Activated T-helper 1 cell treated with anti-CD3 and anti-CD28 coated beads, Interleukin-12 subunit alpha, Interleukin-12 subunit beta, Interleukin-2, Interleukin-4 antibody, amounts not matched to agents 30 ng/mL and 10 ng/mL and 1 ng/mL, durations not matched to agents 14 hours and 24 hours and 36 hours (primary cell): ENCODE measurements at regions of chr5 and their contacts with region 1.

Region 1: DNA sequence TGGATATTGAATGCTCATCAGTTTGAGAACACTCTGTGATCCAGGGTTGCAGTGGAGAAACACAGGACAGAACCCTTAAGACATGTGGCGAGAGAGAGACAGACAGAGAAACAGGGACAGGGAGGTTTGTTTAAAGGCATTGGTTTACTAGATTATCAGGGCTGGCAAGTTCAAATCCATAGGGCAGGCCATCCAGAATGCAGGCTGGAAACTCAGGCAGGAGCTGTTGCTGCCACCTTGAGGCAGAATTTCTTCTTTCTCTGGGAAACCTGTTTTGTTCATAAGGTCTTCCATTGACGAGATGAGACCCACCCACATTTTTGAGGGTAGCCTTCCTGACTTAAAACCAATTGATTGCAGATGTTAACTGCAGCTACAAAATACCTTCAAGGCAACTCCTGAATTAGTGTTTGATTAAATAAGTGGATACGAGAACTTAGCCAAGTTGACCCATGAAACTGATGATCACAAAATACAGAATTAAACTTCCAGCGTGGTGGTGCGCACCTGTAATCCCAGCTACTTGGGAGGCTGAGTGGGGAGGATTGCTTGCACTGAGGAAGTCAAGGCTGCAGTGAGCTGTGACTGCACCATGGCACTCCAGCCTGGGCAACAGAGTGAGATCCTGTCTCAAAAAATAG is 55.9 kb downstream of the NSUN2 start:
- DNase-seq: no peak
- H3K4me3 Mint-ChIP-seq: no peak overlapping the region
- H3K27ac Mint-ChIP-seq: no peak overlapping the region
- H3K4me1 Mint-ChIP-seq: peaks cover 6% of the 10 kb centered on the region
- H3K27me3 Mint-ChIP-seq: peaks cover 25% of the 10 kb centered on the region

Region 2: GRCh38 chr5:5886812-5887486 is 690.0 kb before region 1 on chr5:
- intact Hi-C with region 1: loop called (anchors 1 kb)
- DNase-seq: peak; percentile 41
- H3K4me3 Mint-ChIP-seq: no peak overlapping the region
- H3K27ac Mint-ChIP-seq: no peak overlapping the region
- H3K4me1 Mint-ChIP-seq: no peaks in the 10 kb centered on the region
- H3K27me3 Mint-ChIP-seq: no peaks in the 10 kb centered on the region

Region 3: GRCh38 chr5:6291961-6292360 is 285.0 kb before region 1 on chr5:
- intact Hi-C with region 1: loop called (anchors 2 kb)
- DNase-seq: no peak
- H3K4me3 Mint-ChIP-seq: no peak overlapping the region
- H3K27ac Mint-ChIP-seq: no peak overlapping the region
- H3K4me1 Mint-ChIP-seq: no peaks in the 10 kb centered on the region
- H3K27me3 Mint-ChIP-seq: peaks cover 7% of the 10 kb centered on the region

Region 4: GRCh38 chr5:6448622-6449464 is 128.1 kb before region 1 on chr5 and contains the start of gene UBE2QL1:
- intact Hi-C with region 1: loop called (anchors 10 kb)
- DNase-seq: no peak
- H3K4me3 Mint-ChIP-seq: peak within 1 kb of the TSS; percentile 83
- H3K27ac Mint-ChIP-seq: peak within 1 kb of the TSS; percentile 67
- H3K4me1 Mint-ChIP-seq: peaks cover 5% of the 10 kb centered on the region
- H3K27me3 Mint-ChIP-seq: peaks cover 38% of the 10 kb centered on the region
- total RNA-seq, gene UBE2QL1: 0.73 and 0.91 TPM in 2 replicates